Activated CD4-positive, alpha-beta T cell treated with anti-CD3 and anti-CD28 coated beads for 36 hours (primary cell): ENCODE measurements at regions of chr7 and their contacts with region 1.

Region 1: DNA sequence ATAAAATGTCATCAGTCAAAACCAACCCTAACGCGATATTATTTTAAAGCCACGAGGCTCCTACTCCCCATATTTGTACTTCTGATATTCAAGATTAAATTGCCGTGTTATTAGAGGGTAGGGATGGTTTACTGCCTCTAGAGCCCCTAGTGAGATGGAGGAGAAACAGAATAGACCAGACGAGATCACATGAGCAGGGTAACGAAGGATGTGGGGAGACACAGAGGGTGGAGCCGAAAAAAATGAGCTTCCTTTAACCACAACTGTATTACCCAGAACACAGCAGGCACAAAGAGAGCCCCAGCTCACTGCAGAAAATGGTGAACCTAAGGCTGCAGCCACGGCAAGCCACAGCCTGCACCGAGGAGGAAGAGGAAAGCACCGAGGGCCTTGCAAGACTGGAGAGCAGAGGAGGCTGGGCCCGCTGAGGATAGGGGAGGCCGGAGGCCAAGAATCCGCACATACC is 14.3 kb downstream of the ZC3HAV1 start:
- DNase-seq: peak; percentile 80
- ATAC-seq: peak; percentile 88
- H3K4me3 Mint-ChIP-seq: peak overlapping the region; percentile 70
- H3K27ac Mint-ChIP-seq: peak overlapping the region; percentile 92
- H3K4me1 Mint-ChIP-seq: peaks cover 89% of the 10 kb centered on the region
- H3K27me3 Mint-ChIP-seq: no peaks in the 10 kb centered on the region

Region 2: DNA sequence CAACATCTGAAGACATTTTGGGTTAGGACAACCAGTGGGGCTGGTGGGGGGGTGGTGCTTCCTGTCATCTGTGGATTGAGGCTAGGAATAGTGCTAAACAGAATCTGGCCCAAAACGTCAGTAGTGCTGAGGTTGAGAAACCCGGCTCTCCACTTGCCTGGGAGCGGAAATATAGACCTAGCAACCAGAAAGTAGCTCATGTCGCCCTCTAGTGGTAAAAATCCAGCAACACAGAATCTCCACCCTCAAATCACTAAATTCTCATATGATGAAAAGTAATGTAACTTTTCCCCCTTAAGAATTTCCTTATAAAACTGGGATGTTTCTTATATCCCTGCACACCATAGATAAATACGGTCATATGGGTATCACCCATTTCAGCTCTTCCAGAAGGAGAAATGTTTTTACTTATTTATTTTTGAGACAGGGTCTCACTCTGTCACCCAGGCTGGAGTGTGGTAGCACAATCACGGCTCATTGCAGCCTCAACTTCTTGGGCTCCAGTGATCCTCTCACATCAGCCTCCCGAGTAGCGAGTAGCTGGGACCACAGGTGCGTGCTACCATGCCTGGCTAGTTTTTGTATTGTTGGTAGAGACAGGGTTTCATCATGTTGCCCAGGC is 20.1 kb before region 1 on chr7:
- CTCF ChIA-PET with region 1: interaction called, 21 read pairs
- POLR2A ChIA-PET with region 1: interaction called, 7 read pairs
- intact Hi-C with region 1: no loop called
- DNase-seq: peak; percentile 77
- ATAC-seq: peak; percentile 79
- H3K4me3 Mint-ChIP-seq: peak overlapping the region; percentile 24
- H3K27ac Mint-ChIP-seq: peak overlapping the region; percentile 76
- H3K4me1 Mint-ChIP-seq: peaks cover 70% of the 10 kb centered on the region
- H3K27me3 Mint-ChIP-seq: no peaks in the 10 kb centered on the region

Region 3: DNA sequence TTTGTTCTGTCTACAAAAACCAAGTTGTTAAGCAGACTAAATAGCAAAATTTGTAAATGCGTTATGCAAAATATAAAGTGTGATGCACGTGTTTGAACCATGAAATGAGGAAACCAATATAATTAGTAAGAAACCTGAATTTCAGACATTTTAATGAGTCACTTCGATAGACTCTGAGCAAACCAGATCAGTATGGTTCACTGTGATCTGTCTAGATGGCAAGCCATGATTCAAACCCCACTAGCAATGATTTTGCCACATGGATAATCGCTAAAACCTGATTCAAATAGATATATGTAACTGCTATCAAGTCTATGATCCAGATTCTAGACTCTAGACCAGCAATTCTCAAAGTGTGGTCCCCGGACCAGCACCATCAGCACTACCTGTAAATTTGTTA is 10.5 kb before region 1 on chr7:
- CTCF ChIA-PET with region 1: interaction called, 11 read pairs
- POLR2A ChIA-PET with region 1: interaction called, 8 read pairs
- intact Hi-C with region 1: loop called in 1 of 2 experiments (anchors 1 kb)
- DNase-seq: no peak
- ATAC-seq: peak; percentile 63
- H3K4me3 Mint-ChIP-seq: peak overlapping the region; percentile 19
- H3K27ac Mint-ChIP-seq: peak overlapping the region; percentile 95
- H3K4me1 Mint-ChIP-seq: peaks cover 90% of the 10 kb centered on the region
- H3K27me3 Mint-ChIP-seq: no peaks in the 10 kb centered on the region